Caco-2 (cell line): ENCODE measurements at regions of chr11 and their contacts with region 1.

Region 1: DNA sequence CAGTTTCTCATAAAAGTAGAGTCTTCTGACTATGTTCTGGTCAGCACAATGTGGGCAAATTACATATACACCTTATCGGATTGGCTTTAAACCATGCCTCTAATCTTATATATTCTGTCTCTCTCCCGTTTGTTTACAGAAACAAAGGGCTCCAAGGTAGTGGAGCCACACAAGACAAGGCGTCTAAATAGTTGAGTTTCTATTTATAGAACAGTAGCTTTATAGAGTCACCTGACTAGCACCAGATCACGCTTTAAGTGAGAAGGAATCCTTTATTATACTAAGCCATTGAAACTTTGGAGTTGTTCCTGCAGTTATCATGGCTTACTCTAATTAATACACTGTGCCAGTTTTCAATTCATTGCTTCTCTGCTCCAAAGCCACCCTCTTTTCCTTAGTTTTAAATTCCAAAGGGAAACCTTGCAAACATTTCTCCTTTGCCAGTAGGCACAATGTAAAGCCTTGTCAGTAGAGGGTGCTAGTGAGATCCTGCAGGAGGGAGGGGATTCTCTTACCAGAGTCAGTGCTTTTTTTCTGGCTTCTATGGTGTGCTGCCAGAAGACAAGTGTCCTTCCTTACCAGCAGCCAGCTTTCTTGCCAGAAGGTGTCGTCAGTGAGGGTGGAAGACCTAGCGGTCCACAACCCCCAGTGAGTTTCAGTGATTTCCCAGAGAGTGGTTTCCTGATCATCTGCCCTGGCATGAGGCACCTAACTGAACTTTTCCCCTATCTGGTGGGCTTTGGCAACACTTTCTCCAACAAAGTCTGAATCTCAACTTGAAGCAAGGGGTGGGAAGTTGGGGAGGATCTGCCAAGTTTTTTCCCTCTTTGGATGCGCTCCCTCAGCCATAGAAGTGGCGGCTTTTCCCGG is 71.7 kb downstream of the RAB38 start:
- DNase-seq: peak; percentile 88 to 89
- H3K4me3 ChIP-seq: no peak overlapping the region
- H3K4me3 Mint-ChIP-seq: no peak overlapping the region
- H3K27ac Mint-ChIP-seq: no peak overlapping the region
- H3K4me1 ChIP-seq: no peaks in the 10 kb centered on the region
- H3K4me1 Mint-ChIP-seq: no peaks in the 10 kb centered on the region
- H3K27me3 ChIP-seq: no peaks in the 10 kb centered on the region
- H3K27me3 Mint-ChIP-seq: peaks cover 8% of the 10 kb centered on the region
- CTCF ChIP-seq: peak; percentile 92 to 98

Region 2: GRCh38 chr11:87463486-87464102 is 640.0 kb before region 1 on chr11:
- CTCF ChIA-PET with region 1: no interaction called
- POLR2A ChIA-PET with region 1: no interaction called
- intact Hi-C with region 1: loop called (anchors 1 kb)
- DNase-seq: peak; percentile 66 to 72
- H3K4me3 ChIP-seq: no peak overlapping the region
- H3K4me3 Mint-ChIP-seq: no peak overlapping the region
- H3K27ac Mint-ChIP-seq: no peak overlapping the region
- H3K4me1 ChIP-seq: peaks cover 27% of the 10 kb centered on the region
- H3K4me1 Mint-ChIP-seq: no peaks in the 10 kb centered on the region
- H3K27me3 ChIP-seq: no peaks in the 10 kb centered on the region
- H3K27me3 Mint-ChIP-seq: no peaks in the 10 kb centered on the region
- CTCF ChIP-seq: peak; percentile 41 to 48

Region 3: GRCh38 chr11:88016392-88017170 is 87.0 kb before region 1 on chr11:
- CTCF ChIA-PET with region 1: no interaction called
- POLR2A ChIA-PET with region 1: no interaction called
- intact Hi-C with region 1: loop called (anchors 1 kb)
- DNase-seq: peak; percentile 83 to 88
- H3K4me3 ChIP-seq: no peak overlapping the region
- H3K4me3 Mint-ChIP-seq: no peak overlapping the region
- H3K27ac Mint-ChIP-seq: no peak overlapping the region
- H3K4me1 ChIP-seq: no peaks in the 10 kb centered on the region
- H3K4me1 Mint-ChIP-seq: peaks cover 6% of the 10 kb centered on the region
- H3K27me3 ChIP-seq: no peaks in the 10 kb centered on the region
- H3K27me3 Mint-ChIP-seq: no peaks in the 10 kb centered on the region
- CTCF ChIP-seq: peak; percentile 88 to 89

Region 4: GRCh38 chr11:88194990-88195389 is 91.4 kb after region 1 on chr11:
- CTCF ChIA-PET with region 1: no interaction called
- POLR2A ChIA-PET with region 1: no interaction called
- intact Hi-C with region 1: loop called (anchors 5 kb)
- DNase-seq: no peak
- H3K4me3 ChIP-seq: no peak overlapping the region
- H3K4me3 Mint-ChIP-seq: no peak overlapping the region
- H3K27ac Mint-ChIP-seq: no peak overlapping the region
- H3K4me1 ChIP-seq: no peaks in the 10 kb centered on the region
- H3K4me1 Mint-ChIP-seq: no peaks in the 10 kb centered on the region
- H3K27me3 ChIP-seq: no peaks in the 10 kb centered on the region
- H3K27me3 Mint-ChIP-seq: peaks cover 6% of the 10 kb centered on the region
- CTCF ChIP-seq: no peak

Region 5: DNA sequence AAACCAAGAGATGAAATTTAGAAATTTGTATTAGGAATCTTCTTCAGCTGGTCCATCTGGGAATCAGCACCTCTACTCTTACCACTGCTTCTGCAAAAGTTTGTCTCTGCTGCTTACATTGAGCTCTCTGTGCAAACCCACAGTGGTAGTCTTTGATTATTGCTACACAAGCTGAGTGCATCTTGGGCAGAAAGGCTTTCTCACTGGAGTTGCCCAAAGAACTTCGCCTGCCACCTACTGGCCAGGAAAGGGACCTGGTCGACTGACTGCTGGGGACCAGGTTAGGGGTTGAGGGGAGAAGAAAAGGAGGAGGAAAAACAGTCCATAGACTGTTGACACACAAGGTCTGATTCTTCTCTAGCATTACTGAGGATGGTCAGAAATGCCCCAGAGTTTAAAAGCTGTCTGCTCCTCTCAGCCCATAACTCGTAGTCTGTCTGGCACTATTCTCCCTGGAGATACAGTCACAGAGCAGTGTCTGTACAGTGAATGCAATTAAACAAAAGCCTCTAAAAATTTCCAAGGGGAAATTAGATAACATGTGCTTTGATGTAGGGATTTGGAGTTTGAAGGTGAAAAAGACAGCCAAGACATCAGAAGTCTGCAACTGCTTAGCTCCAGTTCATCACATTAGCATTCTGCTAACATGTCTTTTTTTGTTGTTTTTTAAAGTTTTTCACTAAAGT is 448.9 kb after region 1 on chr11:
- CTCF ChIA-PET with region 1: interaction called, 4 read pairs
- POLR2A ChIA-PET with region 1: no interaction called
- intact Hi-C with region 1: loop called (anchors 1 kb)
- DNase-seq: peak; percentile 75 to 79
- H3K4me3 ChIP-seq: no peak overlapping the region
- H3K4me3 Mint-ChIP-seq: no peak overlapping the region
- H3K27ac Mint-ChIP-seq: no peak overlapping the region
- H3K4me1 ChIP-seq: no peaks in the 10 kb centered on the region
- H3K4me1 Mint-ChIP-seq: no peaks in the 10 kb centered on the region
- H3K27me3 ChIP-seq: no peaks in the 10 kb centered on the region
- H3K27me3 Mint-ChIP-seq: peaks cover 14% of the 10 kb centered on the region
- CTCF ChIP-seq: peak; percentile 94 to 97